Lower leg skin (tissue), 4 donors: ENCODE measurements at regions of chr1 and their contacts with region 1.

Region 1: GRCh38 chr1:71049951-71050598 is 2.5 kb upstream of the PTGER3 start:
- DNase-seq: no peak
- H3K4me3 ChIP-seq: no peak overlapping the region
- CTCF ChIP-seq: no peak
- POLR2A ChIP-seq: no peak

Region 2: GRCh38 chr1:70528590-70529333 is 521.3 kb before region 1 on chr1:
- intact Hi-C with region 1: loop called (anchors 10 kb)
- DNase-seq: peak in 1 of 2 donors; percentile 22
- H3K4me3 ChIP-seq: no peak overlapping the region
- CTCF ChIP-seq: peak in 1 of 3 donors; percentile 20
- POLR2A ChIP-seq: no peak

Region 3: GRCh38 chr1:71093938-71094337 is 43.9 kb after region 1 on chr1:
- intact Hi-C with region 1: no loop called
- DNase-seq: no peak
- H3K4me3 ChIP-seq: no peak overlapping the region
- CTCF ChIP-seq: no peak
- POLR2A ChIP-seq: no peak